Heart right ventricle (tissue), 16 donors: ENCODE measurements at regions of chr13 and their contacts with region 1.

Region 1: DNA sequence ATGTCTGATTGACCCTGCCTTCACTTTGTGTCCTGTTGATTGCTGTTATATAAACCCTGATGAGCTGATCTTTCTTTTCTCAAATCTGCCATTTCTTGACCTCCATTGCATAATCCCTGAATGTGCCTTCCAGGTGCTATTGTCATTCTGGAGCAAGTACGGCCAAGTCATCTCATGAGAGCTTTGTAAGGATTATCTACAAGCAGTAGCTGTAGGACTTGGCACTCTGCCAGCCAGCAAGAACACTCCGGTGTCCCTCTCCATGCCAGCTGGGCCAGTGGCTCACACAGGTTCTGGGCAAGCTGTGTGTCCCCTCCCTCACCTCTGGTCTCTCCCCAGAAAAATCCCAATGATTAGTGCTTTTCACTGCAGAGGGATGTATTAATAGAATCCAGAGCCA is 348.1 kb downstream of the FOXO1 start:
- DNase-seq: peak; percentile 41 to 61
- ATAC-seq: peak in 5 of 8 donors; percentile 22 to 70 (median 36)
- H3K4me3 ChIP-seq: no peak overlapping the region
- H3K27ac ChIP-seq: no peak overlapping the region
- H3K4me1 ChIP-seq: peaks cover 0 to 31% (median 19%) of the 10 kb centered on the region in 9 donors
- H3K27me3 ChIP-seq: peaks cover 0 to 2% (median 0%) of the 10 kb centered on the region in 7 donors
- CTCF ChIP-seq: no peak

Region 2: DNA sequence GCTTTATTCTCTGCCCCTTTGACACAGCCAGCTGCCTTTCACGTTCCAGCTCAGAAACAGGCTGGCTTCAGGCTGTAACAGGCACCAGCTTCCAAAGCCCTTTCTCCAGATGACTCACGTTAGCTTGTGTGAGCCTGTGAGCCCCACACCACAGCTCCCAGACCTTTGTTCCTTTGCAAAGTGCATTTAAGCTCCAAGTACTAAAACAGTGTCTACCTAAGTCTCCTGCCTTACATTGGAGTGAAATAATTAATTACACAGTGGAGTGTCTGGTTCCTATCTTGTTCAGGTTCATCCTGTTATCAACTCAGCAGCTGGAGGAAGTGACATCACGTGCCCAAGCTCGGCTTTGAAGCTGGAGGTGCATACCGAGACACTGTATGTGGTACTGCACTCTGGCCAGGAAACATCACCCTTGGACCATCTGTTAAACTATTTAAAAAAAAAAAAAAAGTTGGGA is 127.7 kb before region 1 on chr13:
- intact Hi-C with region 1: loop called in 1 of 10 experiments (anchors 10 kb)
- DNase-seq: no peak
- ATAC-seq: peak; percentile 42 to 64 (median 56)
- H3K4me3 ChIP-seq: no peak overlapping the region
- H3K27ac ChIP-seq: peak overlapping the region; percentile 32 to 89 (median 78)
- H3K4me1 ChIP-seq: peaks cover 20 to 55% (median 42%) of the 10 kb centered on the region in 9 donors
- H3K27me3 ChIP-seq: no peaks in the 10 kb centered on the region
- CTCF ChIP-seq: no peak

Region 3: GRCh38 chr13:40371531-40372125 is 53.3 kb after region 1 on chr13:
- intact Hi-C with region 1: no loop called
- DNase-seq: no peak
- ATAC-seq: no peak
- H3K4me3 ChIP-seq: no peak overlapping the region
- H3K27ac ChIP-seq: no peak overlapping the region
- H3K4me1 ChIP-seq: peaks cover 0 to 16% (median 6%) of the 10 kb centered on the region in 9 donors
- H3K27me3 ChIP-seq: no peaks in the 10 kb centered on the region
- CTCF ChIP-seq: no peak